Activated CD4-positive, alpha-beta T cell treated with anti-CD3 and anti-CD28 coated beads for 36 hours (primary cell): ENCODE measurements at regions of chr22 and their contacts with region 1.

Region 1: GRCh38 chr22:20568989-20569769 is 61.8 kb downstream of the MED15 start:
- DNase-seq: peak; percentile 79
- ATAC-seq: peak; percentile 62
- H3K4me3 Mint-ChIP-seq: no peak overlapping the region
- H3K27ac Mint-ChIP-seq: peak overlapping the region; percentile 69
- H3K4me1 Mint-ChIP-seq: peaks cover 75% of the 10 kb centered on the region
- H3K27me3 Mint-ChIP-seq: no peaks in the 10 kb centered on the region

Region 2: DNA sequence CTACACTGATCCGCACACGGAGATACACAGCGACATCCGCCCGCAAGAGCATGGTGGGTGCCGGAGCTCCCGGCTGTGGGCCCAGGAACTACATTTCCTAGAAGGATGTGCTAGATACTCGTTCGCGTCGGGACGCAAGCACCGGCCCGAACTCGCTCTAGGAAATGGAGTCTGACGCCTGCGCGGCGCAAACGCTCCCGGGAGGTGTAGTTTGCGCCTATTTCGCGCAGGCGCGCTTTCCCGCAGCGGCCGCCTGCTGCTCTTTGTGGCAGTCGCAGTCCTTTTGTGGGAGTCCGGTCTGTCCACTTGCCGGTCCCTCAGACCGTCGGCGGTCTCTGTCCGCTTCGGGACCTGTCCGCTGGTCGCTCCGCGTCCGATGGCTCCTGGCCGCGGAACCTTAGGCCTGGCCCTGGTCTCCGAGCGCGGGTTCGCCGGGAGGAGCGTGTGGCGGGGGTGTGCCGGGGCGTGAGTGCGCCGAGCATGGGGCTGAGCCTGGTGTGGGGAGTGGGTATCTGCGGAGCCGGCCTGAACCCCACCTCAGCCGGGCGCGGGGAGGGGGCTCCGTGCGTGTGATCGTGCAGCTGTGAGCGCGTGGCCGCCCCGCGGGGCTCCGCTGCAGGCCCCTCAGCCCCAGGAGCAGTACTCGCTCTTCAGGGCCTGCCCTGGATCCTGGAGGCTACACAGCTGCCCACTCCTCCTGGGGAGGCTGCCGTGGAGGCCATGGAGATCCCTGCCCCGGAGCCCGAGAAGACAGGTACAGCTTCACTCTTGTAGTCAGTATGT is 175.1 kb before region 1 on chr22 and contains the start of gene ZNF74:
- CTCF ChIA-PET with region 1: no interaction called
- POLR2A ChIA-PET with region 1: no interaction called
- intact Hi-C with region 1: no loop called
- DNase-seq: peak; percentile 90
- ATAC-seq: peak; percentile 95
- H3K4me3 Mint-ChIP-seq: peak within 1 kb of the TSS; percentile 77
- H3K27ac Mint-ChIP-seq: peak within 1 kb of the TSS; percentile 86
- H3K4me1 Mint-ChIP-seq: peaks cover 24% of the 10 kb centered on the region
- H3K27me3 Mint-ChIP-seq: no peaks in the 10 kb centered on the region
- total RNA-seq, gene ZNF74: 6.5 to 10.3 TPM

Region 3: GRCh38 chr22:20430720-20431510 is 138.3 kb before region 1 on chr22:
- CTCF ChIA-PET with region 1: interaction called, 4 read pairs
- POLR2A ChIA-PET with region 1: no interaction called
- intact Hi-C with region 1: loop called in 1 of 2 experiments (anchors 10 kb)
- DNase-seq: peak; percentile 79
- ATAC-seq: peak; percentile 57
- H3K4me3 Mint-ChIP-seq: peak overlapping the region; percentile 45
- H3K27ac Mint-ChIP-seq: no peak overlapping the region
- H3K4me1 Mint-ChIP-seq: peaks cover 12% of the 10 kb centered on the region
- H3K27me3 Mint-ChIP-seq: peaks cover 51% of the 10 kb centered on the region

Region 4: GRCh38 chr22:20550821-20551744 is 18.1 kb before region 1 on chr22:
- CTCF ChIA-PET with region 1: interaction called, 185 read pairs
- POLR2A ChIA-PET with region 1: interaction called, 3 read pairs
- intact Hi-C with region 1: no loop called
- DNase-seq: peak; percentile 79
- ATAC-seq: peak; percentile 85
- H3K4me3 Mint-ChIP-seq: peak overlapping the region; percentile 60
- H3K27ac Mint-ChIP-seq: peak overlapping the region; percentile 99
- H3K4me1 Mint-ChIP-seq: peaks cover 92% of the 10 kb centered on the region
- H3K27me3 Mint-ChIP-seq: no peaks in the 10 kb centered on the region

Region 5: GRCh38 chr22:20606041-20606783 is 37.0 kb after region 1 on chr22:
- CTCF ChIA-PET with region 1: interaction called, 4 read pairs
- POLR2A ChIA-PET with region 1: no interaction called
- intact Hi-C with region 1: loop called in 1 of 2 experiments (anchors 5 kb)
- DNase-seq: peak; percentile 85
- ATAC-seq: peak; percentile 93
- H3K4me3 Mint-ChIP-seq: no peak overlapping the region
- H3K27ac Mint-ChIP-seq: no peak overlapping the region
- H3K4me1 Mint-ChIP-seq: peaks cover 7% of the 10 kb centered on the region
- H3K27me3 Mint-ChIP-seq: no peaks in the 10 kb centered on the region